Heart right ventricle (tissue), 16 donors: ENCODE measurements at regions of chrX and their contacts with region 1.

Region 1: DNA sequence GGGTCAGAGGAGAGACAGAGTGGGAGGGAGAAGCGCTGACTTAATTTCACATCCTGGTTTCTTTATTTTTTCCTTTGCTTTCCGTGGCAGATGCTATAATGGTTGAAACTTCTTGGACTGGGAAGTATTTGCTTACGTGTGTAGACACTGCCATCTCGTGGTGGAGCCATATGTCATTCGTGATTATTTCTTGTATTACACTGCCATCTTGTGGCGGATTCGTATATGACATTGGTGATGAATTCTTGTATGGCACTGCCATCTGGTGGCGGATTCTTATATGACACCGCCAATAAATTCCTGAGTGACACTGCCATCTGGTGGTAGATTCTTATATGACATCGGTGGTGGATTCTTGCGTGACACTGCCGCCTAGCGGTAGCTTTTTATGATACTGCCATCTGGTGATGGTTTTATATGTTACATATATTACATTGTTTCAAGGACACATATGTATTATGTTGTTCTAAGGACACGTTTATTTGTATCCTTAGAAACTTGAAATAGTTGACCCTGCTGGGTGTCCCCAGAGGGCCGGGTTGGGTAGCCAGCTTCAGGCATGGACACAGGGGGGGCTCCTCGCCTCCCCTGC is 37.3 kb upstream of the CLCN4 start:
- DNase-seq: peak in 1 of 2 donors; percentile 60
- ATAC-seq: peak; percentile 62 to 79 (median 68)
- H3K4me3 ChIP-seq: no peak overlapping the region
- H3K27ac ChIP-seq: peak overlapping the region in 3 of 10 donors; percentile 31 to 60 (median 48)
- H3K4me1 ChIP-seq: peaks cover 0 to 35% (median 7%) of the 10 kb centered on the region in 9 donors
- H3K27me3 ChIP-seq: no peaks in the 10 kb centered on the region
- CTCF ChIP-seq: peak; percentile 93 to 100 (median 99)

Region 2: DNA sequence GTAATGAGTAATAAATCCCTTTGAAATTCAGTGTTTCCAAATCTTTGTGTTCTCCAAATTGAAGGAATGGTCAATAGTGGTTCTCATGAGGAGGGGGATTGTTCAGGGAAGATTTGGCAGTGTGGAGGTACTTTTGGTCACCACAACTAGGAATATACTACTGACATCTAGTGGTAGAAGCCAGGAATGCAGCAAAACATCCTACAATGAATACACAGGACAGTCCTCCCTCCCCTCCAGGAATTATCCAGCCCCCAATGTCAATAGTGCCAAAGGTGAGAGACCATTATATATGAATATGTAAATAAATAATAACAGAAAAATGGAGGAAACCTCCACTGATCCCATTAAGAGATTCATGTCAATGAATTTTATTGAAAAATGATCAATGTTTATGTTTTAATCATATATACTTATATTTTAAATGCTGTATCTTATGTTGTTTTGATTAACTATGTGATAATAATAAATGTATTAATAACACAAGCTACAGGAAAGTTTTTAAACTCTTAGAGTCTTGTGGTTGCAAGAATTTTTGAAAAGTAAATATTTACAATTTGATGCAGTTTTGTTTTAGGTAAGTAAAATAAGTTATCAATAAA is 1303.9 kb before region 1 on chrX:
- intact Hi-C with region 1: loop called in 1 of 10 experiments (anchors 5 kb)
- DNase-seq: peak in 1 of 2 donors; percentile 13
- ATAC-seq: no peak
- H3K4me3 ChIP-seq: no peak overlapping the region
- H3K27ac ChIP-seq: no peak overlapping the region
- H3K4me1 ChIP-seq: no peaks in the 10 kb centered on the region
- H3K27me3 ChIP-seq: peaks cover 0 to 22% (median 0%) of the 10 kb centered on the region in 7 donors
- CTCF ChIP-seq: peak; percentile 15 to 81 (median 67)

Region 3: DNA sequence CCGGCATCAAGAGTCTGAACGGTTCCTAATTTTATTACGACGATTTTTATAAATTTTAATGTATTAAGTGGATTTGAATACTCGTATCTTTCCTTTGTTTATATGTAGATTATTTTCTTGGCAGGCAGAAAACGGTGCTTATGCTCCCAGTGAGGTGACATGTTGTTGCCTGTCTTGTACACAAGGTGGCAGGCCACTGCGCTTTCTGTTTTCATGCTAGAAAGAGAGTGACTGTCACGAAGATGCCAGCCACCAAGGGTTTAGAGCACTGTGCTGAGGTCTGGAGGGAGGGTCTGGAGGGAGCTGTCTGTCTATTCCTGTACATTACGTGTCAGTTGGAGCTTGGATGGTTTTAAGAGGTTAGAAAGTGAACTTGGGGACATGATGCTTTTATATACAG is 245.5 kb before region 1 on chrX:
- intact Hi-C with region 1: loop called in 5 of 10 experiments (anchors 5 to 10 kb)
- DNase-seq: no peak
- ATAC-seq: peak in 2 of 8 donors; percentile 58 to 64
- H3K4me3 ChIP-seq: no peak overlapping the region
- H3K27ac ChIP-seq: no peak overlapping the region
- H3K4me1 ChIP-seq: no peaks in the 10 kb centered on the region
- H3K27me3 ChIP-seq: peaks cover 0 to 63% (median 0%) of the 10 kb centered on the region in 7 donors
- CTCF ChIP-seq: peak in 8 of 9 donors; percentile 19 to 67 (median 54)

Region 4: GRCh38 chrX:9995855-9996339 is 123.6 kb before region 1 on chrX:
- intact Hi-C with region 1: loop called (anchors 1 to 5 kb)
- DNase-seq: peak; percentile 82 to 86
- ATAC-seq: peak; percentile 78 to 97 (median 93)
- H3K4me3 ChIP-seq: no peak overlapping the region
- H3K27ac ChIP-seq: no peak overlapping the region
- H3K4me1 ChIP-seq: peaks cover 0 to 4% (median 0%) of the 10 kb centered on the region in 9 donors
- H3K27me3 ChIP-seq: peaks cover 0 to 4% (median 0%) of the 10 kb centered on the region in 7 donors
- CTCF ChIP-seq: peak; percentile 84 to 97 (median 91)

Region 5: DNA sequence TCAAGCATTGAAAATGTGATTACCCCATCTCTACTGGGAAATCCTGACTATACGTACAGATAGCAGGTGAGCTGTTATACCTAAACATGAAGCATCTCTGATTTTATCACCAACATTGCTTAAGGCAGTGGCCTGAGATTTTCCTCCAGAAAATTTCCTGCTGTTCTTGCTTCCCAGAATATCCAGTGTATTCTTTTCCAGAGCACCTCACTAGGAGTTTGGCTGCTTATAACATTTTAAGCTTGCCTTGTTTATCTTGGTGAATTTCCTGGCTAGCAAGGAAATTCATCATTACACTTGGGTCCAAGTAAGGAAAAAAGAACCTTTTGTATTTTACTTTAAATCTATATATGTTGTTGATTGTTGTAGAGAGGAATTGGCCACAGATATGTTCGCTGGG is 35.7 kb before region 1 on chrX:
- intact Hi-C with region 1: loop called in 1 of 10 experiments (anchors 5 kb)
- DNase-seq: no peak
- ATAC-seq: peak in 5 of 8 donors; percentile 17 to 54 (median 24)
- H3K4me3 ChIP-seq: peak overlapping the region in 2 of 10 donors; percentile 7 to 29
- H3K27ac ChIP-seq: peak overlapping the region; percentile 54 to 84 (median 74)
- H3K4me1 ChIP-seq: peaks cover 3 to 63% (median 42%) of the 10 kb centered on the region in 9 donors
- H3K27me3 ChIP-seq: peaks cover 0 to 9% (median 0%) of the 10 kb centered on the region in 7 donors
- CTCF ChIP-seq: no peak